Colonic mucosa (tissue), 4 donors: ENCODE measurements at regions of chr6 and their contacts with region 1.

Region 1: DNA sequence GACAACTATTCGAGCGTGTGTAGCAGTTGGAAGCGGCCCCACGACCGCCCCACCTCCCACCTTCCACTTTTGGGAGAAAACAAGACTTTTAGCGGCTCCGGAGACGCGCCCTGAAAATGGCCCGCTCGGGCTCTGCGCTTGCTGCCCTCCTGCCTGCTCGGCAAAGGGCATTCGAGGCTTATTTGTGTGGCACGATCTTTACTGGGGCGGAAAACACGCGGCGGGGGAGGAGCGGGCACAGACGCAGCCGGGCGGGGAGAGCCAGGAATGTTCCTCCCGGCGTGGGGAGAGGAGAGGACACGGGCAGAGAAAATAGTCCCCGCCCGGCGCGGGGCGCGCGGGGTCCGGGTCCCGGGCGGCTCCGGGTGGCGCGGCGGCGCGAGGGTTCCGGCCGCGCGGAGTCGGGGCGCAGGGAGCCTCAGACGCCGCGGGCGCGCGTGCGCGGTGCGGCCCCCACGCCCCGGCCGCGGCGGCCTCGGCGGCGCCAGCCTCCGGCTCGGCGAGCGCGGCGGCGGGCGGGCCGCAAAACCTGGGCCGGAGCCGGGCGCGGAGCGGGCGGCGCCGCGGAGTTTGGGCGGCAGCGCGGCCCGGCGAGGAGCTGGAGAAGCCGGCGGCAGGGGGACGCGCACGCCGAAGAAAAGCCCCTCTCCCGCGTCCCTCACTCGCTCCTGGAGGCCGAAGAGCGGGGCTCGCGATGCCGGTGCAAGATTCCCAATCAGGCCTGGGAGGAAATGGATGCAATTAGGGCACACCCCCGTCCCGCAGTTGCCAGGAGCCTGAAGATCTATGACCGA is 90.0 kb upstream of the ARID1B start:
- DNase-seq: peak; percentile 82
- H3K4me3 ChIP-seq: peak overlapping the region; percentile 54
- H3K27ac ChIP-seq: peak overlapping the region; percentile 96
- H3K4me1 ChIP-seq: no peaks in the 10 kb centered on the region
- H3K27me3 ChIP-seq: no peaks in the 10 kb centered on the region
- CTCF ChIP-seq: no peak

Region 2: DNA sequence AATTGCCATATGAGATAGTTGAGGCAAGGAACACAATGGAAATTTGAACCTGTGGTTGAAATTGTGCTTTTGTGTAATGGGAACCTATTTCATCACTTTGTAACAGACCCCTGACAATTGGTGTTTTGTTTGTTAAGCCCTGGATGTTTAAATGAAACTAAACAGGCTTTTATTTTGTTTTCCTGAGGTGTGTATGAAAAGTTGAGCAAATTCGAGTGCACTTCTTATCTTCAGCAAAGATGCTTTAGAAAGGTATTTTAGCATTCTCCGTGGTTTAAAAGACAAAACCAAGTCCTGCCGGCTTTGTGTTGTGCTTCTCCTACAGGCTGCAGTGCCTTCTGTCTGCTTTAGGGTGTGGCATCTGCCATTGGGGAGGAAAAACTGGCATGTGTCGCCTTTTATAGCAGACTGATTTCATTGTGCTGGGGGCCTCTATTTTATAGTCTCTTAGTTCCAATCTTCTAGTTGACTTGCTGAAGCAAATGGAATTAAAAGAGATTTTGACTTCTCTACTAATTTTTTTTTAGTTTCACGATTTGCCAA is 87.7 kb after region 1 on chr6:
- intact Hi-C with region 1: loop called (anchors 5 kb)
- DNase-seq: peak; percentile 62
- H3K4me3 ChIP-seq: no peak overlapping the region
- H3K27ac ChIP-seq: no peak overlapping the region
- H3K4me1 ChIP-seq: peaks cover 8% of the 10 kb centered on the region
- H3K27me3 ChIP-seq: no peaks in the 10 kb centered on the region
- CTCF ChIP-seq: no peak

Region 3: GRCh38 chr6:157021344-157021992 is 334.3 kb after region 1 on chr6:
- intact Hi-C with region 1: loop called (anchors 5 kb)
- DNase-seq: peak; percentile 93
- H3K4me3 ChIP-seq: peak overlapping the region; percentile 63
- H3K27ac ChIP-seq: peak overlapping the region; percentile 99
- H3K4me1 ChIP-seq: no peaks in the 10 kb centered on the region
- H3K27me3 ChIP-seq: no peaks in the 10 kb centered on the region
- CTCF ChIP-seq: peak; percentile 29